ENCODE measurements at regions of chr7 and their contacts with region 1.

Region 1: DNA sequence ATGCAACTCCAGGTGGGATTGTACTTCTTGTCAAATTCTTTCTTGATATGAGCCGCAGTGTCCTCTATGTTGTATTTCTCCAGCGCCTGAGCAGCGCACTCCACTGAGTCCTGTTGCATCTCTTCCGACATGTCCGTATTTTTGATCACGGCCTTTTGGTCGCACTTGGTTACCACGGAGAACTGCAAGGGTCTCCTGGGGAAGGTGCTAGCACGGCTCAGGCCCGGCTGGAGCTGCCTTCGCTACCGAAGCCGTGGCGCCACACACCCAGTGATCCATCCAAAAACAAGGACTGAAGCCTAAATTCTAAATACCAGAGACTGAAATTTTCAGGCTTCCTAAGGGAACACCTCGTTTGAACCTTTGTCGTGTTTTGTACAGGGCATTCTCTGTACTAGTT is 194.4 kb upstream of the SEMA3D start:
- DNase-seq: no peak
- ATAC-seq: no peak
- H3K4me3 ChIP-seq: no peak overlapping the region
- H3K27ac ChIP-seq: no peak overlapping the region
- H3K4me1 ChIP-seq: no peaks in the 10 kb centered on the region
- H3K27me3 ChIP-seq: no peaks in the 10 kb centered on the region
- CTCF ChIP-seq: no peak
- POLR2A ChIP-seq: no peak
- RAD21 ChIP-seq: no peak

Region 2: DNA sequence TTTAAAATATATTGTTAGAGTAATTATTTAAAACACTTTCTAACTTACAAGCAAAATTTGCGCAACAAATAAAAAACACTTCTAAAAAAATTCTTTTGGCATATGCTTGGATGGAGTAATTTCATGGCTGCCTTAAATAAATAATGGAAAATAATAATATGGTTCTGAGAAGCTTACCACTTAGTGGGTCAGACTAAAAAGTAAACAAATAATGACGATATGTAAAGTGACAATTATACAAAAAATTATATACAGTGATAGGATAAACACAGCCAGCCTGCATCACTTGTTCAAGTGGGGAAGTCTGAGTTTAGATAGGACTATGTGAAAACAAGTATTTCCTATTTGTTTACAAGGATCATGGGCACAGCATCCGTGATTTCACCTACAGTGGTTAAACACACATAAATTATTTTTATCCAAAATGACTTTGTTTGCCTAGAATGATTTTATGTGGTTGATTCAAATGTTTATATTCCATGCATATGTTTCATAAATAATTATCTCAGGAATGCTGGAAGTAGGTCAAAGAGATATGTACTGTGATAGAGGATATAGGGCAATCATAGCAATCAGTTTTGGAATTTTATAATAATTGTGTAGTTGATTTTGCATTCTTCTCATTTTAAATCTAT is 52.6 kb before region 1 on chr7:
- CTCF ChIA-PET with region 1: no interaction called
- POLR2A ChIA-PET with region 1: no interaction called
- dilution Hi-C with region 1: no loop called
- in situ Hi-C with region 1: no loop called
- intact Hi-C with region 1: no loop called
- DNase-seq: no peak
- ATAC-seq: peak; percentile 62
- H3K4me3 ChIP-seq: no peak overlapping the region
- H3K27ac ChIP-seq: no peak overlapping the region
- H3K4me1 ChIP-seq: no peaks in the 10 kb centered on the region
- H3K27me3 ChIP-seq: no peaks in the 10 kb centered on the region
- CTCF ChIP-seq: no peak
- POLR2A ChIP-seq: no peak
- RAD21 ChIP-seq: no peak

Region 3: DNA sequence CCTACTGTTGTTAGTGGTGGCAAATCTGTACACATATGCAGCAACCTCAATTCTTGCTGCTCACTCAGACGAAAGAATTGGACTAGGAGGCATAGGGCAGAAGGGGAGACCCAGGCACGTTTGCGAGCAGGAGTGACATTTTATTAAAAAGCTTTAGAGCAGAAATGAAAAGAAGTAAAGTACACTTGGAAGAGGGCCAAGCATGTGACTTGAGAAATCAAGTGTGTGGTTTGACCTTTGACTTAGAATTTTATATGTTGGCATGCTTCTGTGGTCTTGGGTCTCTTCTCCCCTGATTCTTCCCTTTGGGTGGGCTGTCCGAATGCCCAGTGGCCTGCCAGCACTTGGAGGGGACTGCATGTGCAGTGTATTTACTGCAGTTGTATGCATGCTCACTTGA is 11.1 kb after region 1 on chr7:
- CTCF ChIA-PET with region 1: interaction called, 3 read pairs
- POLR2A ChIA-PET with region 1: no interaction called
- dilution Hi-C with region 1: no loop called
- in situ Hi-C with region 1: no loop called
- intact Hi-C with region 1: loop called (anchors 1 kb)
- DNase-seq: no peak
- ATAC-seq: no peak
- H3K4me3 ChIP-seq: no peak overlapping the region
- H3K27ac ChIP-seq: no peak overlapping the region
- H3K4me1 ChIP-seq: no peaks in the 10 kb centered on the region
- H3K27me3 ChIP-seq: no peaks in the 10 kb centered on the region
- CTCF ChIP-seq: no peak
- POLR2A ChIP-seq: no peak
- RAD21 ChIP-seq: no peak